ENCODE measurements at regions of chr10 and their contacts with region 1.

Region 1: DNA sequence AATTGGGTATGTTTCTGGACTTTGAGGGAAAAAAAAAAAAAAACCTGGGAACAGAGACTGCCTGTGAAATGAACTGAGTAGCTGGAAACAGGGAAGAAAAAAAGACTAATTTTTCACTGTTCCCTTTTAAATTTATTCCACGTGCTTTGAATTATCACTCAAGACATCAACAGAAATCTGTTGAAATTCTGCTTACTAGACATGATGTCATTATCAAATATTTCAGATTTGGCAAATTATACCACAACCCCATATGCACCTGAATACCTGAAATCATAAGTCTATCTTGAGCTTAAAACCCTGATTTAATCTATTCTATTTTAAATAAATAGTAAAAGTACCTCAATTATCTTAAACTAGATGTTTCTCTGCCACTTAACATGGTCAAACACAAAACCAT is 5.0 kb upstream of the REEP3 start:
- DNase-seq: no peak
- ATAC-seq: no peak
- H3K4me3 ChIP-seq: no peak overlapping the region
- H3K4me3 Mint-ChIP-seq: no peak overlapping the region
- H3K27ac ChIP-seq: no peak overlapping the region
- H3K27ac Mint-ChIP-seq: no peak overlapping the region
- H3K4me1 ChIP-seq: peaks cover 12 to 26% of the 10 kb centered on the region in 2 experiments
- H3K4me1 Mint-ChIP-seq: peaks cover 72 to 78% (median 75%) of the 10 kb centered on the region in 3 donors
- H3K27me3 ChIP-seq: no peaks in the 10 kb centered on the region
- H3K27me3 Mint-ChIP-seq: no peaks in the 10 kb centered on the region

Region 2: DNA sequence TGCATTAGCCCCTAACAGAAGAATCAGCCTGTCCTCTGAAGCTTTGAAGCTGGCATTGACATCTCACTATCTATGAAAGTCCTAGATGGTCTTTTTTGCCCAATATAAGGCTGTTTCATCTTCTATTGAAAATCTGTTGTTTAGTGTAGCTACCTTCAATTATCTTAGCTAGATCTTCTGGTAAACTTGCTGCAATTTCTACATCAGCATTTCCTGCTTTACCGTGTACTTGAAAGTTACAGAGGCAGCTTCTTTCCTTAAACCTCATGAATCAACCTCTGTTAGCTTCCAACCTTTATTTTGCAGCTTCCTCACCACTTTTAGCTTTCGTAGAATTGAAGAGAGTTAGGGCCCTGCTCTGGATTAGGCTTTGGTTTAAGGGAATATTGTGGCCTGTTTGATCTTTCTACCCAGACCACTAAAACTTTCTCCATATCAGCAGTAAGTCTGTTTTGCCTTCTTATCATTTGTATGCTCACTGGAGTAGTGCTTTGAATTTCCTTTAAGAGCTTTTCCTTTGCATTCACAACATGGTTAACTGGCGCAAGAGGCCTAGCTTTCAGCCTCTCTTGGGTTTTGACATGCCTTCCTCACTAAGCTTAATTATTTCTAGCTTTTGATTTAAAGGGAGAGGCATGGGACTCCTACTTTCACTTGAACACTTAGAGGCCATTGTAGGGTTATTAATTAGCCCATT is 1582.2 kb before region 1 on chr10:
- CTCF ChIA-PET with region 1: no interaction called
- POLR2A ChIA-PET with region 1: no interaction called
- DNase-seq: peak in 1 of 35 experiments; percentile 29
- ATAC-seq: peak; percentile 65 to 75 (median 68)
- H3K4me3 ChIP-seq: no peak overlapping the region
- H3K4me3 Mint-ChIP-seq: peak overlapping the region in 1 of 3 donors; percentile 22
- H3K27ac ChIP-seq: peak overlapping the region; percentile 46
- H3K27ac Mint-ChIP-seq: peak overlapping the region; percentile 87 to 91
- H3K4me1 ChIP-seq: peaks cover 12 to 17% of the 10 kb centered on the region in 2 experiments
- H3K4me1 Mint-ChIP-seq: peaks cover 64 to 79% (median 75%) of the 10 kb centered on the region in 3 donors
- H3K27me3 ChIP-seq: no peaks in the 10 kb centered on the region
- H3K27me3 Mint-ChIP-seq: no peaks in the 10 kb centered on the region

Region 3: GRCh38 chr10:63421591-63421990 is 94.6 kb before region 1 on chr10:
- CTCF ChIA-PET with region 1: no interaction called
- POLR2A ChIA-PET with region 1: interaction called in 1 of 2 experiments, 15 read pairs
- DNase-seq: peak in 26 of 35 experiments; percentile 11 to 67 (median 24)
- ATAC-seq: peak; percentile 90 to 99 (median 96)
- H3K4me3 ChIP-seq: no peak overlapping the region
- H3K4me3 Mint-ChIP-seq: peak overlapping the region in 2 of 3 donors; percentile 37 to 41
- H3K27ac ChIP-seq: peak overlapping the region; percentile 67
- H3K27ac Mint-ChIP-seq: peak overlapping the region; percentile 93
- H3K4me1 ChIP-seq: peaks cover 11 to 13% of the 10 kb centered on the region in 2 experiments
- H3K4me1 Mint-ChIP-seq: peaks cover 40 to 50% (median 47%) of the 10 kb centered on the region in 3 donors
- H3K27me3 ChIP-seq: no peaks in the 10 kb centered on the region
- H3K27me3 Mint-ChIP-seq: no peaks in the 10 kb centered on the region